ENCODE measurements at regions of chr19 and their contacts with region 1.

Region 1: DNA sequence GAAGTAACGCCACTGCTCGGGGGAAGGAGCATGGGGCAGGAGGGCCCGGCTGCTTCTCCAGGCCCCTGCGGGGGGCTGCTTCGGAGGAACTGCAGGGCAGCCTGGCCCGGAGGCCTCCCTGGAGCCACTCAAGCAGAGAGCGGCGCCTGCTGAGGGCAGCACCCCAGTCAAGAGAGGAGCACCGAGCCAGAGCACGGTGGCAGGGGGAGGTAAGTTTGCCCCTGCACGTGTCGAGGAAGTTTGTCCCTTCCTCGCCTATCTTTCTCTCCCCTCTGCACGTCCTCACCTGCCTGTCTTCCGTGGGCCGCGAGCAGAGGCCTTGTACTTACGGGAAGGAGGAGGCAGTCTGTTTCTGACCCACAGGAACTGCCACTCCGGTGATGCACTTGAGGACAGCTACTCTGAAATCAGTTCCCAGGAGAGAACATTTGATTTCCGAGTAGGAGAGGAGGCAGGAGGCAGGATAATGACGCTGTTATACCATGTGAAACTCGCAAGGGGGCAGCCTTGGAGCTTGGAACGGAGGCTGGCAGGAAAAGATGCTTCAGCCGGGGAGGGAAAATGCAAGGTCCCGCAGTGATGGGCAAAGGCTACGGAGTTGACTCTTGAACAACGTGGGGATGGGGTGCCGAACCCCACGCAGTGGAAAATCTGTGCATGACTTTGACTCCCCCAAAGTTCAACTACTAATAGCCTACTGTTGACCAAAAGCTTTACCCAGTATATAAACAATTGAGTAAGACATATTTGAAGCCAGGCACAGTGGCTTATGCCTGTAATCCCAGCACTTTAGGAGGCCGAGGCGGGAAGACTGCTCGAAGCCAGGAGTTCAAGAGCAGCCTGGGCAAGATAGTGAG is 5.0 kb downstream of the FFAR1 start:
- DNase-seq: peak; percentile 87 to 98
- ATAC-seq: peak; percentile 77 to 88
- H3K4me3 ChIP-seq: no peak overlapping the region
- H3K27ac ChIP-seq: no peak overlapping the region
- H3K4me1 ChIP-seq: no peaks in the 10 kb centered on the region
- CTCF ChIP-seq: peak; percentile 98
- EP300 ChIP-seq: no peak
- POLR2A ChIP-seq: no peak
- RAD21 ChIP-seq: peak; percentile 98 to 99

Region 2: GRCh38 chr19:34881982-34882381 is 470.7 kb before region 1 on chr19:
- CTCF ChIA-PET with region 1: no interaction called
- POLR2A ChIA-PET with region 1: no interaction called
- DNase-seq: no peak
- ATAC-seq: no peak
- H3K4me3 ChIP-seq: no peak overlapping the region
- H3K27ac ChIP-seq: no peak overlapping the region
- H3K4me1 ChIP-seq: no peaks in the 10 kb centered on the region
- CTCF ChIP-seq: no peak
- EP300 ChIP-seq: no peak
- POLR2A ChIP-seq: no peak
- RAD21 ChIP-seq: no peak

Region 3: DNA sequence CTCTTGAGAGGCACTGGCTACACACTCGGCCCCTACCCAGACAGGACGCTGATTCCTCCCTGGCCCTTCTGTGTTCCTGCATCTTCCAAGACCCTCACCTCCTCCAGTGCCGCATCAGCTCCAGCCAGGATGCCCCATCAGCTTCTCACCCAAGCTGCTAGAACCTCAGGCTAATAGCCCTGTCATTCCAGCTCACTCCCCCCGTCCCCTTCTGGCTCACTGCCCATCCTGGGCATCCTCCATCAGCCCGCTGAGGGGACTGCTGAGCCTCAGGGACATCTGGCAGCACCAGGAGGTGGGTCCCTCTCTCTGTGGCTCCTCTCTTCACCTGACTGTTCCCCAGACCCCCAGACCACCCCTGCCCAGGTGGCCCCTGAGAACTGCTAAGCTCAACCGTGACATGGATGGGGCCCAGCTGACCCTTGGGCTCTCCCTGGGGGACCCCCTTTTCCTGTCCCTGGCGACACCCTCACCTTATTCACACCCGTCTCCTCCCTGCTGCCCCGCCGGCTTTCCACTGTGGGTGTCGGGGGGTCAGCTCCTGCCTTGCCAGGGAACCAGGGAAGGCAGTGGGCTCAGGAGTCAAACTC is 10.4 kb after region 1 on chr19:
- CTCF ChIA-PET with region 1: interaction called, 71 read pairs
- POLR2A ChIA-PET with region 1: interaction called, 4 read pairs
- DNase-seq: no peak
- ATAC-seq: peak in 1 of 2 experiments; percentile 9; a peak in 3 of 6 replicates
- H3K4me3 ChIP-seq: no peak overlapping the region
- H3K27ac ChIP-seq: no peak overlapping the region
- H3K4me1 ChIP-seq: no peaks in the 10 kb centered on the region
- CTCF ChIP-seq: no peak
- EP300 ChIP-seq: no peak
- POLR2A ChIP-seq: no peak
- RAD21 ChIP-seq: no peak

Region 4: DNA sequence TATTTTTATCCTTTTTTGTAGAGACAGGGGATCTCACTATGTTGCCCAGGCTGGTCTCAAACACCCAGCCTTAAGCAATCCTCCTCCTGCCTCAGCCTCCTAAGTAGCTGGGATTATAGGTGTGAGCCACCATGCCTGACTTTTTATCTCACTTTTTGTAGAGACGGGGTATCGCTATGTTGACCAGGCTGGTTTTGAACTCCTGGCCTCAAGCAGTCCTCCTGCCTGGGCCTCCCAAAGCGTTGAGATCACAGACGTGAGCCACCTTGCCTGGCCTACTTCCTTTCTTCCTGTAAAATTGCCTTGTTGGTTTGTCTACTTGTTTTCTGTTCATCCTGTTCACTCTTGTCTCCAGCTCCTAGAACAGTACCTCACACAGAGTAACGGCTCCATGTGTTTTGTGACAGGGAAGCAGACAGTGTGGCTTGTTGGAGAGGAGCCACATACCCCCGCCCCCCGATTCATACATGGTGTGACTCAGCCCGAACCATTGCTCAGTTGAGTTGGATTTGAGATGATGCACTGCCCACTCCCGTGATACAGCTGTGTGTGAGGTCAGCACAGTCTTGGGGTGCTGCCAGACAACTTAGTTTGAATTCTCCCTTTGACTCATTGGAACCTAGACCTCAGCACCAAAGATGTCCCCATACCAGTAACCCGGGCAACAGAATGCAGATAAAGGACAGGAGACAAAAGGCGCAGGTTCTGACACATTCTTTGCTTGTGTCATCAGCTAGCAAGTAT is 52.4 kb after region 1 on chr19:
- CTCF ChIA-PET with region 1: interaction called, 13 read pairs
- POLR2A ChIA-PET with region 1: no interaction called
- DNase-seq: peak; percentile 66
- ATAC-seq: peak; percentile 62 to 80
- H3K4me3 ChIP-seq: no peak overlapping the region
- H3K27ac ChIP-seq: no peak overlapping the region
- H3K4me1 ChIP-seq: no peaks in the 10 kb centered on the region
- CTCF ChIP-seq: no peak
- EP300 ChIP-seq: no peak
- POLR2A ChIP-seq: no peak
- RAD21 ChIP-seq: no peak

Region 5: DNA sequence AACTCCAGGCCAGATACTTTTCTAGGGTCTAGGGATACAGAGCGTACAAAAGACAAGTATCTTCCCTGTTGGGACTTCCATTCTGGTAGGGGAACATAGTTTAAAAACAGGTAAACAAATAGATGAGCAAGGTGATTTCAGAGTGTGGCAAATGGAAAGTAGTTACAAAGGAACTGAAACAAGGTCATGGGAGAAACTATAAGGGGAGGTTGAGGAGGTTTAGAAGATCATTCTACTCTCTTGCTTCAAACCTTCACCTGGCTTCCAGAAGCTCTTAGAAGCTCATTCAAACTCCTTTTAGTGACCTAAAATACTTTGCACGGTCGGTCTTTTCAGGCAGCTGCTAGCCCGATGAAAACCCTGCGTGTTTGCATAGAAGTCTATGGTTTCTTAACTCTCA is 104.5 kb after region 1 on chr19:
- CTCF ChIA-PET with region 1: interaction called, 368 read pairs
- POLR2A ChIA-PET with region 1: no interaction called
- DNase-seq: no peak
- ATAC-seq: no peak
- H3K4me3 ChIP-seq: no peak overlapping the region
- H3K27ac ChIP-seq: no peak overlapping the region
- H3K4me1 ChIP-seq: peaks cover 17% of the 10 kb centered on the region
- CTCF ChIP-seq: no peak
- EP300 ChIP-seq: no peak
- POLR2A ChIP-seq: no peak
- RAD21 ChIP-seq: no peak

Region 6: DNA sequence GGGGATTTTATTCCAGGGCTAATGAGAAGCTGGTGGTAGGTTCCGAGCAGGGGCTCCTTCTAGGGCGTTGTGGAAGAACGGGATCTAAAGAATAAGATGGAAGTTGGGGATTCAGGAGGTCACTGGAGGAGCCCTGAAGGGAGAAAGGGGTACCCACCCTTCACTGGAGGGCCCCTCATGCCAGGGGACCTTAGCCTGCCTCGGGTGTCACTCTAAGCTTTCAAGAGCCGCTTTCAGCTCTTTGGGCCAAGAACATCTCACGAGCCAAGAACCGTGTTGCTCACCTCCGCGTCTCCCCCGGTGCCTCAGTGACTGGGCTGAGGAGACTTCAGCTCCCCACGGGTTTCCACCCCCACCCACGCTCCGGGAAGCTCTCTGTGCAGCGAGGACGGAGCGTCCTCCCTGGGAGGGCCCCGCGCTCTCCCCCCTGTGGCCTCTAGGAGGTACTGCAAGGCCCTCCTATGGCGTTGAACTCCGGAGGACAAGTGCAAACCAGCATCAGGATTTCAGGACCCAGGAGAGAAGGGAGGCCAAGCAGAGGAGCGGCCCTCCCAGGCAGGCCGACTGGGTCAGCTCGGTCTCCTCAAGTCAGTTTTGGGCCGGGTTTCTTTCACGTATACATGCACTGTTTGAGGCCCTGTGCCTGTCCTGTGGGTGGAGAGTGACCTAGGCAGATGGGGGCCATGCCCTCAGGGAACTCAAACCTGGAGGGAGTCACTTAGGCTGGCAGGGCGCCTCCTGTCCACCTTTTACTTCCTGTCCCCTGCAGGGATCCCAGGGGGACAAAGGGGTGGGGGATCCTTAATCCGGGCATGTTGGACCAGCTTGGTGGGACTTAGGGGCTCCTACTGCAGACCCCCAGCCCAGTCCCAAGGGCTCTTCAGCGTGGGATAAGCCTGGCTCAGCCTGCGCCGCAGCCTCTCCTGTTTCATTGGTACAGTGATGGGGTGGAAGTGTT is 142.7 kb after region 1 on chr19:
- CTCF ChIA-PET with region 1: interaction called, 256 read pairs
- POLR2A ChIA-PET with region 1: interaction called, 5 read pairs
- DNase-seq: peak; percentile 81 to 97
- ATAC-seq: peak; percentile 90 to 95
- H3K4me3 ChIP-seq: peak overlapping the region; percentile 24; the same call in 2 of the 3 replicates
- H3K27ac ChIP-seq: peak overlapping the region; percentile 35 to 64; a peak in 3 of 6 replicates
- H3K4me1 ChIP-seq: no peaks in the 10 kb centered on the region; the same call in 2 of the 3 replicates
- CTCF ChIP-seq: peak; percentile 96
- EP300 ChIP-seq: no peak
- POLR2A ChIP-seq: no peak
- RAD21 ChIP-seq: peak; percentile 83 to 85